Activated CD8-positive, alpha-beta T cell treated with anti-CD3 and anti-CD28 coated beads, Interleukin-2, amount 10 ng/mL, durations not matched to agents 7 days and 5 days (primary cell): ENCODE measurements at regions of chr10 and their contacts with region 1.

Region 1: DNA sequence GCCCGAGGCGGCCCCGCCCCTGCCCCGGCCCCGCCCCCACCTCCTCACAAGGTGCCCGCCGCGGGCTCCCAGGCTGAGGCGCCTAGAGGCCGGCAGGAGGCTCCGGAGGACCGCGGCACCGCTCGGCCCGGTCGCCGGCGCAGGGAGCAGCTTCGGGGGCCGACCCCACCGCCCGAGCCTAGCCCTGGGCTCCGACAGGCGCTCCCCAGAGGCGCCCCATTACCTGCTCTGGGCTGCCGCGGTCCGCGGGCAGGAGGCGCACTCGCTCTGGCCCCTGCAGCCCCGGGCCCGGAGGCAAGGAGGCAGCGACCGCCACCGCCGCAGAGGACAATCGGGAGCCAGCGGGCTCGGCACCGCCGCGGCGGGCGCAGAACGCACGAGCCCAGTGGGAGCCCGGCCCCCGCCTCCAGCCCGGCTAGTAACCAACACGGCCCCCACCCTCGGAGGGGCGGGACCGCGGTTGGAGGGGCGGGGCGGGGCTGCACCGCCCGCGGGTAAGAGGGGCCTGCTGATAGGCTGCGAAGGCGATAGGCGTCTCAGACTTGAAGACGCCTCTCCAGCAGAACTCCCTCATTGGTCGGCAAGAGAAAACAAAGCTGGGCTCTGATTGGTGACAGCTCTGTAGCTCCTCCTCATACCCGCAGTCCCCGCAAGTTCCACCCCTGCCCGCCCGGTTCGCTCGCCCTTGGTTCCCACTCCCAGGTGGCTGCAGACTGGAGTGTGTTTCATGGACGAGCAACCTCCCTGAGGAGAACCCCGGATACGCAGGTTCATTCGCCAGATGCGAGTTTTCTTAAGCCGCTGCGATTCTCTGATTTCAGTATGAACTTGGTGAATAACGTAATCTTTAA is at the start of gene MPP7:
- DNase-seq: peak; percentile 96
- ATAC-seq: peak; percentile 98
- H3K4me3 Mint-ChIP-seq: peak within 1 kb of the TSS; percentile 81
- H3K27ac Mint-ChIP-seq: peak within 1 kb of the TSS; percentile 69
- H3K4me1 Mint-ChIP-seq: peaks cover 40% of the 10 kb centered on the region
- H3K27me3 Mint-ChIP-seq: peaks cover 15% of the 10 kb centered on the region
- total RNA-seq, gene MPP7: 13.0 to 13.5 TPM

Region 2: GRCh38 chr10:28008054-28008453 is 294.8 kb before region 1 on chr10:
- CTCF ChIA-PET with region 1: no interaction called
- POLR2A ChIA-PET with region 1: no interaction called
- DNase-seq: no peak
- ATAC-seq: no peak
- H3K4me3 Mint-ChIP-seq: no peak overlapping the region
- H3K27ac Mint-ChIP-seq: no peak overlapping the region
- H3K4me1 Mint-ChIP-seq: no peaks in the 10 kb centered on the region
- H3K27me3 Mint-ChIP-seq: peaks cover 37% of the 10 kb centered on the region

Region 3: DNA sequence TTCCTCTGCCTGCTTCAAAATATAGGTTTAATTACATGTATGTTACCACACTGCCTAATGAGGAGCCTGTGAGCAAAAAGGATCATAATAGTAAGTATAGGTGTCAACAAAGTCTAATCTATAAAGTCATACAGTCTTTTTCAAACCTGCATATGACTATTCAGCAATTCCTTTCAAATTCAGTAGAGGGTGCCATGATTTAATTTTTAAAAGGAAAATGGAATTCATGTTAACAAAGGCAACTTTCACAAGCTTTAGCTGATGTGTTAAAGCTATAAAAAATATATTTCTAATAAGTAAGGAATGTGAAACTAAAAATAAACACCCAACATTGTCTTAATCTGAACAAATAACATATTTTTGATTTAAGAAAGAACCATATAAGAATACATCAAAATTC is 52.1 kb before region 1 on chr10:
- CTCF ChIA-PET with region 1: interaction called, 59 read pairs
- POLR2A ChIA-PET with region 1: no interaction called
- DNase-seq: no peak
- ATAC-seq: no peak
- H3K4me3 Mint-ChIP-seq: no peak overlapping the region
- H3K27ac Mint-ChIP-seq: no peak overlapping the region
- H3K4me1 Mint-ChIP-seq: peaks cover 16% of the 10 kb centered on the region
- H3K27me3 Mint-ChIP-seq: no peaks in the 10 kb centered on the region

Region 4: DNA sequence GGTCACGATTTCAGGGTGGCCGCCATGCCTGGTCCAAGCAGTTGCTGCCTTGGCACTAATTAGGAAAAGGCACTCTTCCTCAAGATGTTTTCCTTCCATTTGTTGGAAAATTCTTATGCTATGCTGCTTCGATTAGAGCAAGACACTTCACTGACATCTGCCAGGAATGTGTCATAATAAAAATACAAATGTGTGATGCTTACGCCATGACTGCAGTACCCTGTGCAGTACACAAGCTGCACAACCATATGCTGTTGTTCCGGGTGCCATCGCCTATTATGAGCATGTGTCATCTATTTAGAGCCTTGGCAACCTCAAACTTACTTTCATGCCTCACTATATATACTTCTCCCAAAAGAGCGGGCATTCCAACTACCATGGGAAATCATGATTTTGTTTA is 14.9 kb after region 1 on chr10:
- CTCF ChIA-PET with region 1: interaction called, 24 read pairs
- POLR2A ChIA-PET with region 1: no interaction called
- DNase-seq: no peak
- ATAC-seq: no peak
- H3K4me3 Mint-ChIP-seq: no peak overlapping the region
- H3K27ac Mint-ChIP-seq: no peak overlapping the region
- H3K4me1 Mint-ChIP-seq: no peaks in the 10 kb centered on the region
- H3K27me3 Mint-ChIP-seq: no peaks in the 10 kb centered on the region

Region 5: GRCh38 chr10:28334296-28334695 is 31.4 kb after region 1 on chr10:
- CTCF ChIA-PET with region 1: interaction called, 183 read pairs
- POLR2A ChIA-PET with region 1: interaction called, 47 read pairs
- DNase-seq: peak; percentile 82
- ATAC-seq: peak; percentile 70
- H3K4me3 Mint-ChIP-seq: peak overlapping the region; percentile 89
- H3K27ac Mint-ChIP-seq: peak overlapping the region; percentile 100
- H3K4me1 Mint-ChIP-seq: peaks cover 68% of the 10 kb centered on the region
- H3K27me3 Mint-ChIP-seq: no peaks in the 10 kb centered on the region

Region 6: DNA sequence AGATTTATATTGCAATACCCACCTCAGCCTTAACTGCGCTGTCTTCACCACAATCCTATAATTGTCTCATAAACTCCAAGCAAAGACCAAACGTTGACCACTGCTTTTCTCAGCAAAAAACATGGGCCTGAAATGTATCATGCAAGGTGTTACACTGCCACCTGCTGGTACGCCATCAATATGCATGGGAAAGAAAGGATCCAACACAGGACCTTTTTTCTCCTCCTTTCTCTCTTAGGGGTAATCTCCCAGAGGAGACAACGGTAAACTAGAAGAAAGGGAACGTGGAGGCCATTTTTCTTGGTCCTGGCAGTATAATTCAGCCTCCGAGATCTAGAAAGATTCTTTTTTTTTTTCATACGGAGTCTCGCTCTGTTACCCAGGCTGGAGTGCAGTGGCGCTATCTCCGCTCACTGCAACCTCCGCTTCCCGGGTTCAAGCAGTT is 79.1 kb after region 1 on chr10:
- CTCF ChIA-PET with region 1: interaction called, 186 read pairs
- POLR2A ChIA-PET with region 1: interaction called, 25 read pairs
- DNase-seq: peak; percentile 91
- ATAC-seq: peak; percentile 96
- H3K4me3 Mint-ChIP-seq: no peak overlapping the region
- H3K27ac Mint-ChIP-seq: no peak overlapping the region
- H3K4me1 Mint-ChIP-seq: peaks cover 27% of the 10 kb centered on the region
- H3K27me3 Mint-ChIP-seq: peaks cover 4% of the 10 kb centered on the region

Region 7: GRCh38 chr10:28432210-28432676 is 129.4 kb after region 1 on chr10:
- CTCF ChIA-PET with region 1: no interaction called
- POLR2A ChIA-PET with region 1: no interaction called
- DNase-seq: peak; percentile 38
- ATAC-seq: peak; percentile 65
- H3K4me3 Mint-ChIP-seq: peak overlapping the region; percentile 44
- H3K27ac Mint-ChIP-seq: no peak overlapping the region
- H3K4me1 Mint-ChIP-seq: peaks cover 6% of the 10 kb centered on the region
- H3K27me3 Mint-ChIP-seq: no peaks in the 10 kb centered on the region

Region 8: DNA sequence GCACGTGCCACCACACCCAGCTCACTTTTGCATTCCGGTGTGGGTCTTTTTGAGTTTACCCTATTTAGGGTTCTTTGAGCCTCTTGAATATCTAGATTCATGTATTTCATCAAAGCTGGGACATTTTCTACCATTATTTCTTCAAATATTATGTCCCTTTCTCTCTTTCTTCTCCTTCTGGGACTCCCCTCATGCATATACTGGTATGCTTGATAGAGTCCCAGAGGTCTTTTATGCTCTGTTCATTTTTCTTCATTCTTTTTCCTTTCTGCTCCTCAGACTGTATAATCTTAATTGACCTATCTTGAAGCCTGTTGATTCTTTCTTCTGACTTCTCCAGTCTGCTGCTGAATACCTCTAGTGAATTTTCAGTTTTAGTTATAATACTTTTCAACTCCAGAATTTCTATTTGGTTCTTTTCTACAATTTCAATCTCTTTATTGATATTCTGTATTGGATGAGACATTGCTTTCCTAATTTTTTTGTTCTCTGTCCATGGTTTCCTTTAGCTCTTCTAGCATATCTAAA is 220.9 kb after region 1 on chr10:
- CTCF ChIA-PET with region 1: no interaction called
- POLR2A ChIA-PET with region 1: no interaction called
- DNase-seq: no peak
- ATAC-seq: no peak
- H3K4me3 Mint-ChIP-seq: no peak overlapping the region
- H3K27ac Mint-ChIP-seq: no peak overlapping the region
- H3K4me1 Mint-ChIP-seq: peaks cover under 1% of the 10 kb centered on the region
- H3K27me3 Mint-ChIP-seq: no peaks in the 10 kb centered on the region